Endothelial cell of umbilical vein (primary cell): ENCODE measurements at regions of chr3 and their contacts with region 1.

Region 1: DNA sequence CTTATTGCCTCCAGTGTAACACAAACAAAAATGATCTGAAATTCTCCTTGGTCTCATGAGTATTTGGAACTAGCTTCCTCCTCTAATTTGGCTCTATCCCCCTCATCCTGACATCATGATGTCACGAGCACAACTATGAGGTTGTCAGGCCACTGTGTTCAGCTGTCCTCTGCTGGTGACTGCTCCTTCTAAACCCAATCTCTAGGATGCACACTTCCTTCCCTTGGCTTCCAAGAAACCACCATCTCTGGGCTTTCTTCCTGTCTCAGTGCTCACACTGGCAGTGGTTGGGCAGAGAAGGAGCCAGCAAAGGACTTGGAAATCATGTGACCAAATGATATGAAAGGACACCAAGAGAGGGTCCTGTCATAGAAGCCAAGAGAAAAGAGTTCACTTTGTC is 30.7 kb upstream of the EIF1B start:
- DNase-seq: no peak
- H3K4me3 ChIP-seq: no peak overlapping the region
- H3K27ac ChIP-seq: no peak overlapping the region
- H3K4me1 ChIP-seq: no peaks in the 10 kb centered on the region
- H3K27me3 ChIP-seq: peaks cover 0 to 2% of the 10 kb centered on the region in 2 experiments
- CTCF ChIP-seq: no peak
- POLR2A ChIP-seq: no peak

Region 2: DNA sequence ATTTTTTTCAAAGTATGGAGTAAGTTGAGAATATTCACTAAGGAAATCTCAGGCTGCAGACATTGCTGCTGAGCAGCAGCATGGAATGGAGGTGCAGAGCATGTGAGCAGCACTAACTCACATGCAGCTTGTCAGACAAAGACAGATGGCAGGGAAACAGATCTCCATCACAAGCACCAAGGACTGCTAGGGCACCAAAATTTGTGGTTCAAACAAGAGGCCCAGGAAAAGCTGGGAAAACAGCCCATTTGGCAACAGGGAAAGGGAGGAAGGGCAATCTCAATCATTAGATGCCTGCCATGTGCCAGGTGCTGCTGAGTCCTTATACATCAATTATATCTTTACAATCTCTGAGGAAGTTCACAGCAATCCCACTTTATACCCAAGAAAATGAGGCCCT is 16.5 kb before region 1 on chr3:
- CTCF ChIA-PET with region 1: no interaction called
- POLR2A ChIA-PET with region 1: no interaction called
- dilution Hi-C with region 1: no loop called
- intact Hi-C with region 1: loop called (anchors 2 kb)
- DNase-seq: no peak
- H3K4me3 ChIP-seq: no peak overlapping the region
- H3K27ac ChIP-seq: no peak overlapping the region
- H3K4me1 ChIP-seq: no peaks in the 10 kb centered on the region
- H3K27me3 ChIP-seq: no peaks in the 10 kb centered on the region
- CTCF ChIP-seq: no peak
- POLR2A ChIP-seq: no peak